Breast epithelium (tissue), 4 donors: ENCODE measurements at regions of chr4 and their contacts with region 1.

Region 1: GRCh38 chr4:84966383-84967242 is at the start of gene WDFY3:
- DNase-seq: peak; percentile 79 to 82
- H3K4me3 ChIP-seq: peak within 1 kb of the TSS; percentile 93 to 98 (median 97)
- H3K27ac ChIP-seq: peak within 1 kb of the TSS; percentile 96 to 100
- H3K4me1 ChIP-seq: no peaks in the 10 kb centered on the region
- H3K27me3 ChIP-seq: no peaks in the 10 kb centered on the region
- CTCF ChIP-seq: no peak
- POLR2A ChIP-seq: peak; percentile 72
- total RNA-seq, gene WDFY3: 119 to 156 (median 125) TPM

Region 2: GRCh38 chr4:84733343-84734033 is 233.1 kb before region 1 on chr4:
- intact Hi-C with region 1: no loop called
- DNase-seq: no peak
- H3K4me3 ChIP-seq: no peak overlapping the region
- H3K27ac ChIP-seq: no peak overlapping the region
- H3K4me1 ChIP-seq: no peaks in the 10 kb centered on the region
- H3K27me3 ChIP-seq: no peaks in the 10 kb centered on the region
- CTCF ChIP-seq: no peak
- POLR2A ChIP-seq: no peak

Region 3: GRCh38 chr4:84901173-84901572 is 65.4 kb before region 1 on chr4:
- intact Hi-C with region 1: loop called (anchors 2 kb)
- DNase-seq: no peak
- H3K4me3 ChIP-seq: no peak overlapping the region
- H3K27ac ChIP-seq: no peak overlapping the region
- H3K4me1 ChIP-seq: no peaks in the 10 kb centered on the region
- H3K27me3 ChIP-seq: no peaks in the 10 kb centered on the region
- CTCF ChIP-seq: no peak
- POLR2A ChIP-seq: no peak

Region 4: GRCh38 chr4:84952009-84952408 is 14.6 kb before region 1 on chr4:
- intact Hi-C with region 1: no loop called
- DNase-seq: no peak
- H3K4me3 ChIP-seq: no peak overlapping the region
- H3K27ac ChIP-seq: peak overlapping the region; percentile 48 to 64
- H3K4me1 ChIP-seq: peaks cover 0 to 20% of the 10 kb centered on the region in 2 donors
- H3K27me3 ChIP-seq: no peaks in the 10 kb centered on the region
- CTCF ChIP-seq: no peak
- POLR2A ChIP-seq: no peak